ENCODE measurements at regions of chr3 and their contacts with region 1.

Region 1: DNA sequence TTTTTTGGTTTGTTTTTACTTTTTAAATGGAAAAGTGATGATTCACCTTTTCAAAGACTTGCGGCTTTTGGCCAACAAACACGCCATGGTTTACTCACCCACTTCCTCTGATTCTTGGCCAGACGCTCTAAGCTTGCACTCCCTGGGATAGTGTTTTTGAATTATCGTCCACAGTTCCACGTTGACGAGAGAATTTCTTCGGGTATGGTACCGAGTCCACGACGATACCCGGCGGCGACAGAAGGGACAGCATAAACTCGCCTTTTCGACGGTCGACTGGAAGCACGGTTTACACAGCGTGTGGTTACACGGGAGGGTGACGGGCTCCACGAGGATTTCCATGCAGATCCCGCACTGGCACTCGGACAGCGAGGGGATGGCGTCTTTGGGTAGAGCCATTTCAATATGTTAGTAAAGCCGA is 783 bp downstream of the RNF168 start:
- DNase-seq: peak; percentile 17 to 74 (median 49)
- ATAC-seq: peak; percentile 56
- H3K4me3 ChIP-seq: peak overlapping the region; percentile 94
- H3K4me3 Mint-ChIP-seq: peak overlapping the region; percentile 92 to 100 (median 98)
- H3K27ac ChIP-seq: peak overlapping the region; percentile 79
- H3K27ac Mint-ChIP-seq: peak overlapping the region; percentile 86 to 96 (median 95)
- H3K4me1 ChIP-seq: peaks cover 12 to 20% of the 10 kb centered on the region in 2 donors
- H3K4me1 Mint-ChIP-seq: peaks cover 27 to 47% (median 40%) of the 10 kb centered on the region in 7 donors
- H3K27me3 ChIP-seq: no peaks in the 10 kb centered on the region
- H3K27me3 Mint-ChIP-seq: peaks cover 0 to 10% (median 0%) of the 10 kb centered on the region in 5 donors

Region 2: GRCh38 chr3:196081791-196082618 is 420.8 kb before region 1 on chr3 and contains the start of gene TFRC:
- CTCF ChIA-PET with region 1: no interaction called
- POLR2A ChIA-PET with region 1: no interaction called
- intact Hi-C with region 1: loop called (anchors 5 kb)
- DNase-seq: peak; percentile 92 to 98 (median 95)
- ATAC-seq: peak; percentile 98
- H3K4me3 ChIP-seq: peak within 1 kb of the TSS; percentile 70
- H3K4me3 Mint-ChIP-seq: peak within 1 kb of the TSS; percentile 89 to 100 (median 96)
- H3K27ac ChIP-seq: peak within 1 kb of the TSS; percentile 96
- H3K27ac Mint-ChIP-seq: peak within 1 kb of the TSS; percentile 86 to 99 (median 95)
- H3K4me1 ChIP-seq: peaks cover 17 to 25% of the 10 kb centered on the region in 2 donors
- H3K4me1 Mint-ChIP-seq: peaks cover 22 to 46% (median 39%) of the 10 kb centered on the region in 7 donors
- H3K27me3 ChIP-seq: no peaks in the 10 kb centered on the region
- H3K27me3 Mint-ChIP-seq: no peaks in the 10 kb centered on the region
- total RNA-seq, gene TFRC: 51.3 to 417 (median 144) TPM

Region 3: GRCh38 chr3:196274585-196274984 is 228.2 kb before region 1 on chr3:
- CTCF ChIA-PET with region 1: no interaction called
- POLR2A ChIA-PET with region 1: no interaction called
- intact Hi-C with region 1: loop called in 1 of 2 experiments (anchors 5 kb)
- DNase-seq: peak in 8 of 9 donors; percentile 20 to 72 (median 42)
- ATAC-seq: peak; percentile 91
- H3K4me3 ChIP-seq: peak overlapping the region; percentile 7
- H3K4me3 Mint-ChIP-seq: peak overlapping the region; percentile 41 to 84 (median 74)
- H3K27ac ChIP-seq: peak overlapping the region; percentile 50
- H3K27ac Mint-ChIP-seq: peak overlapping the region; percentile 57 to 96 (median 89)
- H3K4me1 ChIP-seq: peaks cover 10 to 21% of the 10 kb centered on the region in 2 donors
- H3K4me1 Mint-ChIP-seq: peaks cover 19 to 62% (median 37%) of the 10 kb centered on the region in 7 donors
- H3K27me3 ChIP-seq: no peaks in the 10 kb centered on the region
- H3K27me3 Mint-ChIP-seq: no peaks in the 10 kb centered on the region

Region 4: GRCh38 chr3:196317687-196318467 is 184.9 kb before region 1 on chr3 and contains the start of gene DYNLT2B:
- CTCF ChIA-PET with region 1: no interaction called
- POLR2A ChIA-PET with region 1: interaction called, 4 read pairs
- intact Hi-C with region 1: loop called (anchors 1 to 2 kb)
- DNase-seq: peak; percentile 82 to 91 (median 88)
- ATAC-seq: peak; percentile 94
- H3K4me3 ChIP-seq: peak within 1 kb of the TSS; percentile 89
- H3K4me3 Mint-ChIP-seq: peak within 1 kb of the TSS; percentile 82 to 95 (median 94)
- H3K27ac ChIP-seq: peak within 1 kb of the TSS; percentile 90
- H3K27ac Mint-ChIP-seq: peak within 1 kb of the TSS; percentile 88 to 98 (median 94)
- H3K4me1 ChIP-seq: no peaks in the 10 kb centered on the region
- H3K4me1 Mint-ChIP-seq: peaks cover 0 to 23% (median 9%) of the 10 kb centered on the region in 7 donors
- H3K27me3 ChIP-seq: no peaks in the 10 kb centered on the region
- H3K27me3 Mint-ChIP-seq: no peaks in the 10 kb centered on the region
- total RNA-seq, gene DYNLT2B: 3.3 to 20.8 (median 5.1) TPM

Region 5: GRCh38 chr3:196339493-196340254 is 163.1 kb before region 1 on chr3:
- CTCF ChIA-PET with region 1: no interaction called
- POLR2A ChIA-PET with region 1: no interaction called
- intact Hi-C with region 1: no loop called
- DNase-seq: no peak
- ATAC-seq: peak; percentile 35
- H3K4me3 ChIP-seq: no peak overlapping the region
- H3K4me3 Mint-ChIP-seq: no peak overlapping the region
- H3K27ac ChIP-seq: no peak overlapping the region
- H3K27ac Mint-ChIP-seq: no peak overlapping the region
- H3K4me1 ChIP-seq: no peaks in the 10 kb centered on the region
- H3K4me1 Mint-ChIP-seq: peaks cover 0 to 1% (median 0%) of the 10 kb centered on the region in 7 donors
- H3K27me3 ChIP-seq: no peaks in the 10 kb centered on the region
- H3K27me3 Mint-ChIP-seq: peaks cover 0 to 8% (median 0%) of the 10 kb centered on the region in 5 donors

Region 6: GRCh38 chr3:196486263-196486662 is 16.5 kb before region 1 on chr3:
- CTCF ChIA-PET with region 1: interaction called, 4 read pairs
- POLR2A ChIA-PET with region 1: interaction called, 3 read pairs
- intact Hi-C with region 1: loop called in 1 of 2 experiments (anchors 2 kb)
- DNase-seq: peak in 2 of 9 donors; percentile 7 to 20
- ATAC-seq: no peak
- H3K4me3 ChIP-seq: no peak overlapping the region
- H3K4me3 Mint-ChIP-seq: no peak overlapping the region
- H3K27ac ChIP-seq: no peak overlapping the region
- H3K27ac Mint-ChIP-seq: no peak overlapping the region
- H3K4me1 ChIP-seq: no peaks in the 10 kb centered on the region
- H3K4me1 Mint-ChIP-seq: peaks cover 6 to 19% (median 15%) of the 10 kb centered on the region in 7 donors
- H3K27me3 ChIP-seq: no peaks in the 10 kb centered on the region
- H3K27me3 Mint-ChIP-seq: no peaks in the 10 kb centered on the region

Region 7: DNA sequence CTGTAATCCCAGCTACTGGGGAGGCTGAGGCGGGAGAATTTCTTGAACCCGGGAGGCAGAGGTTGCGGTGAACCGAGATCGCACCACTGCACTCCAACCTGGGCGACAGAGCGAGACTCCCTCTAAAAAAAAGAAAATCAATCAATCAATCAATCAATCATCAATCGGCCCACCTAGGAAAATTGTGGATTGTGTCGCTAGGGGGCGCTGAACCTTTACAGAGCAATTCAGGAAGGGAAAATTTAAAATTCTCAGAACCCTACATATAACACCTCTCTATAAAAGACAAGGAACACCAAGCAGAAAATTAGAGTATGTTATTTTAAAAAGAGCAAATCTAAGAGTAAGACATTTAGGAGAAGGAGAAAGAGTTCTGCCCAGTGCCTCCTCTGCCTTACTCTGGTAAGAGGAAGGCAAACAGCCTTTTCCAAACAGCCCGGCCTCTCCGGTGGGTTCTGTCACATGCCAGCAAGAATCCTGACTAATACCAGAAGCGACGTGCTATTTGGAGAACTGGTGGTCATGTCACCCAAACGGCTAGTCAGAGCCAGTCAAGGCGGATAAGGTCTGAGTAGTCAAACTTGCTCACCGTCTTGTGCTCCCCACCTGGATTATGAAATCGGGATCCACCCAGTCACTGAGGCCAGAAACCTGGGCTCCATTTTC is 34.7 kb after region 1 on chr3:
- CTCF ChIA-PET with region 1: no interaction called
- POLR2A ChIA-PET with region 1: no interaction called
- intact Hi-C with region 1: no loop called
- DNase-seq: peak; percentile 19 to 60 (median 43)
- ATAC-seq: peak; percentile 46
- H3K4me3 ChIP-seq: no peak overlapping the region
- H3K4me3 Mint-ChIP-seq: no peak overlapping the region
- H3K27ac ChIP-seq: no peak overlapping the region
- H3K27ac Mint-ChIP-seq: no peak overlapping the region
- H3K4me1 ChIP-seq: no peaks in the 10 kb centered on the region
- H3K4me1 Mint-ChIP-seq: peaks cover 0 to 8% (median 0%) of the 10 kb centered on the region in 7 donors
- H3K27me3 ChIP-seq: no peaks in the 10 kb centered on the region
- H3K27me3 Mint-ChIP-seq: peaks cover 0 to 14% (median 0%) of the 10 kb centered on the region in 5 donors

Region 8: DNA sequence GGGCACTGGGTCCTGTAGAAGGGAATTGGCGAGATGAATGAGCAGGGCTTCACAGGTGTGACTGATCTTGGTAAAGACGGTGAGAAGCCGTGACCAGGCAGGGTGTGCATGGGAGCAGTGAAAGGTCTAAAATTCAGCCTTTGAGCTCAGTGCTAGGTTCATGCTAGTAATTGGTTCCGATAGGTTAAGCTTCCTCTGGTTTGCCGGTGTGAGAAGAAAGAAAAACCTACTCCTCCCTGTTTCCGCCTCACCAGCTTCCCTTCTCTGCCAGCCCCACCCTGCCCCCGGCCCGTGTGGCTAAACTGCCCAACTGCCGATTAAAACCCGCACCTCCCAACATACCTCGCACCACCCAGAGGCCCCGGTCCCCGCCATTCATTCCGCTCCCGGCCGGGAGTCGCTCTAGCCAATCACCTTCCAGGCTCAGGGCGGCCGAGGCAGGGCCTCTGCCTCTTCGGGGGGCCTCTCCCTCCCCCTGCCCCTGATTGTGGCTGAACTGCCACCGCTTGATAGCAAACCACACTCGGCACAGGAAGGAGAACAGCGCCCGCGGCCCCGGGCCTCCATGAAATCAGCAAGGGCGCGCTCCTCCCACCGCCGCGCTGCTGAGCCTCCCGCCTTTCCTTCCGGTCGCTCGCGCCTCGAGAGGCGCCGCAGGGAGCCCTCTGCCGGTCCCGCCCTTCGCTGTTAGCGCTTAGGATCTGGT is 129.4 kb after region 1 on chr3:
- CTCF ChIA-PET with region 1: no interaction called
- POLR2A ChIA-PET with region 1: no interaction called
- intact Hi-C with region 1: loop called (anchors 1 to 2 kb)
- DNase-seq: peak; percentile 69 to 91 (median 88)
- ATAC-seq: peak; percentile 89
- H3K4me3 ChIP-seq: peak overlapping the region; percentile 48
- H3K4me3 Mint-ChIP-seq: peak overlapping the region; percentile 80 to 96 (median 90)
- H3K27ac ChIP-seq: peak overlapping the region; percentile 78
- H3K27ac Mint-ChIP-seq: peak overlapping the region; percentile 93 to 99 (median 97)
- H3K4me1 ChIP-seq: peaks cover 30 to 31% of the 10 kb centered on the region in 2 donors
- H3K4me1 Mint-ChIP-seq: peaks cover 31 to 74% (median 62%) of the 10 kb centered on the region in 7 donors
- H3K27me3 ChIP-seq: no peaks in the 10 kb centered on the region
- H3K27me3 Mint-ChIP-seq: no peaks in the 10 kb centered on the region

Region 9: GRCh38 chr3:196942226-196942914 is 439.6 kb after region 1 on chr3 and contains the start of gene NCBP2:
- CTCF ChIA-PET with region 1: no interaction called
- POLR2A ChIA-PET with region 1: interaction called, 3 read pairs
- intact Hi-C with region 1: loop called (anchors 1 kb)
- DNase-seq: peak; percentile 98 to 100 (median 99)
- ATAC-seq: peak; percentile 97
- H3K4me3 ChIP-seq: peak within 1 kb of the TSS; percentile 100
- H3K4me3 Mint-ChIP-seq: peak within 1 kb of the TSS; percentile 94 to 99 (median 98)
- H3K27ac ChIP-seq: peak within 1 kb of the TSS; percentile 94
- H3K27ac Mint-ChIP-seq: peak within 1 kb of the TSS; percentile 96 to 100 (median 98)
- H3K4me1 ChIP-seq: peaks cover 16 to 20% of the 10 kb centered on the region in 2 donors
- H3K4me1 Mint-ChIP-seq: peaks cover 30 to 64% (median 49%) of the 10 kb centered on the region in 7 donors
- H3K27me3 ChIP-seq: no peaks in the 10 kb centered on the region
- H3K27me3 Mint-ChIP-seq: peaks cover 0 to 5% (median 0%) of the 10 kb centered on the region in 5 donors
- total RNA-seq, gene NCBP2: 42.9 to 77.3 (median 67.5) TPM